ENCODE measurements at regions of chr20 and their contacts with region 1.

Region 1: DNA sequence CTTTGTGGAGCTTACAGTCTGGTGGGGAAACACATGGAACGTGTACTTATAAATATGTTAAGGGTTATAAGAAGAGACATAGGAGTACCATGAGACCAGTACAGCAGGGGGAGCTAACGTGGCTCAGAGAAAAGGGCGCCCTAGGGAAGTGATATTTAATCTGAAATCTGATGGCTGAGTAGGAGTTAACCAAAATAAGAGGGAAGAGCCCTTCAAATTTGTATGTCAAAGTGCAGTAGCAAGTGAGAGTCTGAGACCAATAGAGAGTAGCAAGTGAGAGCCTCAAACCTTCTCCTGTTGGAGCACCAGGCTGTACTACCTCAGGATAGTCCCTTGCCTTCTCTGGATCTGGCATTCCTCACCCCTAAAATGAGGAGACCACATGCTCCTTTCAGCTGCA is 6.1 kb upstream of the PKIG start:
- DNase-seq: peak; percentile 84
- ATAC-seq: peak; percentile 73
- H3K4me3 ChIP-seq: peak overlapping the region in 2 of 5 experiments; percentile 10 to 17
- H3K4me3 Mint-ChIP-seq: peak overlapping the region; percentile 48
- H3K27ac ChIP-seq: peak overlapping the region; percentile 17 to 24
- H3K27ac Mint-ChIP-seq: peak overlapping the region; percentile 66
- H3K4me1 ChIP-seq: peaks cover 36 to 39% of the 10 kb centered on the region in 2 donors
- H3K4me1 Mint-ChIP-seq: peaks cover 42% of the 10 kb centered on the region
- H3K27me3 ChIP-seq: no peaks in the 10 kb centered on the region
- H3K27me3 Mint-ChIP-seq: no peaks in the 10 kb centered on the region
- CTCF ChIP-seq: peak; percentile 73

Region 2: GRCh38 chr20:44388466-44389023 is 187.8 kb before region 1 on chr20:
- CTCF ChIA-PET with region 1: interaction called, 5 read pairs
- POLR2A ChIA-PET with region 1: no interaction called
- intact Hi-C with region 1: loop called (anchors 10 kb)
- DNase-seq: peak; percentile 63
- ATAC-seq: peak; percentile 69
- H3K4me3 ChIP-seq: no peak overlapping the region
- H3K4me3 Mint-ChIP-seq: no peak overlapping the region
- H3K27ac ChIP-seq: no peak overlapping the region
- H3K27ac Mint-ChIP-seq: no peak overlapping the region
- H3K4me1 ChIP-seq: peaks cover 3 to 9% of the 10 kb centered on the region in 2 donors
- H3K4me1 Mint-ChIP-seq: peaks cover 5% of the 10 kb centered on the region
- H3K27me3 ChIP-seq: peaks cover 0 to 15% (median 5%) of the 10 kb centered on the region in 4 experiments
- H3K27me3 Mint-ChIP-seq: peaks cover 30% of the 10 kb centered on the region
- CTCF ChIP-seq: peak; percentile 74

Region 3: DNA sequence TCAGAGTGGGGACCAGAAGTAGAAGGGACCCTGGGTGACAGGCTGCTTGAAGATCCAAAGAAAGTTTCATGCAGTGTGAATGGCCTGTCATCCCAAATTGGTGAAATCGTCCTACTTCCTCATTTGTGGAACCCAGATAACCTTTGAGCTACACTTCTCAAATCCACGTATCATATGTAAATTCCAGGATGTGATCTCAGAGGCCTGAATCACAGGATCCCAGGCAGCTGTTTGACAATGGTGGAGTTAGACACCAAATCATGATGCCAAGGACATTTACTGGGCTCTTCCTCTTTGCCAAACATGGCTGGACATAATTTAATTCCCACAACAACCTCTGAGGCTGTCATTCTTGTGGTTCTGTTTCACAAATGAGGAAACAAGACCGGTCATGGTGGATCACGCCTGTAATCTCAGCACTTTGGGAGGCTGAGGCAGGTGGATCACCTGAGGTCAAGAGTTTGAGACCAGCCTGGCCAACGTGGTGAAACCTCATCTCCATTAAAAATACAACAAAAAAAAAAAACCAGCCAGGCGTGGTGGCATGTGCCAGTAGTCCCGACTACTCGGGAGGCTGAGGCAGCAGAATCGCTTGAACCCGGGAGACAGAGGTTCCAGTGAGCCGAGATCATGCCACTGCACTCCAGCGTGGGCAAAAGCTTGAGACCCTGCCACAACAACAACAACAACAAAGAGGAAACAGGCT is 140.5 kb before region 1 on chr20:
- CTCF ChIA-PET with region 1: no interaction called
- POLR2A ChIA-PET with region 1: no interaction called
- intact Hi-C with region 1: no loop called
- DNase-seq: no peak
- ATAC-seq: no peak
- H3K4me3 ChIP-seq: no peak overlapping the region
- H3K4me3 Mint-ChIP-seq: no peak overlapping the region
- H3K27ac ChIP-seq: no peak overlapping the region
- H3K27ac Mint-ChIP-seq: no peak overlapping the region
- H3K4me1 ChIP-seq: no peaks in the 10 kb centered on the region
- H3K4me1 Mint-ChIP-seq: no peaks in the 10 kb centered on the region
- H3K27me3 ChIP-seq: no peaks in the 10 kb centered on the region
- H3K27me3 Mint-ChIP-seq: peaks cover 9% of the 10 kb centered on the region
- CTCF ChIP-seq: no peak

Region 4: GRCh38 chr20:44566013-44566412 is 10.3 kb before region 1 on chr20:
- CTCF ChIA-PET with region 1: interaction called, 10 read pairs
- POLR2A ChIA-PET with region 1: no interaction called
- intact Hi-C with region 1: no loop called
- DNase-seq: no peak
- ATAC-seq: no peak
- H3K4me3 ChIP-seq: no peak overlapping the region
- H3K4me3 Mint-ChIP-seq: no peak overlapping the region
- H3K27ac ChIP-seq: no peak overlapping the region
- H3K27ac Mint-ChIP-seq: no peak overlapping the region
- H3K4me1 ChIP-seq: no peaks in the 10 kb centered on the region
- H3K4me1 Mint-ChIP-seq: no peaks in the 10 kb centered on the region
- H3K27me3 ChIP-seq: no peaks in the 10 kb centered on the region
- H3K27me3 Mint-ChIP-seq: no peaks in the 10 kb centered on the region
- CTCF ChIP-seq: no peak

Region 5: DNA sequence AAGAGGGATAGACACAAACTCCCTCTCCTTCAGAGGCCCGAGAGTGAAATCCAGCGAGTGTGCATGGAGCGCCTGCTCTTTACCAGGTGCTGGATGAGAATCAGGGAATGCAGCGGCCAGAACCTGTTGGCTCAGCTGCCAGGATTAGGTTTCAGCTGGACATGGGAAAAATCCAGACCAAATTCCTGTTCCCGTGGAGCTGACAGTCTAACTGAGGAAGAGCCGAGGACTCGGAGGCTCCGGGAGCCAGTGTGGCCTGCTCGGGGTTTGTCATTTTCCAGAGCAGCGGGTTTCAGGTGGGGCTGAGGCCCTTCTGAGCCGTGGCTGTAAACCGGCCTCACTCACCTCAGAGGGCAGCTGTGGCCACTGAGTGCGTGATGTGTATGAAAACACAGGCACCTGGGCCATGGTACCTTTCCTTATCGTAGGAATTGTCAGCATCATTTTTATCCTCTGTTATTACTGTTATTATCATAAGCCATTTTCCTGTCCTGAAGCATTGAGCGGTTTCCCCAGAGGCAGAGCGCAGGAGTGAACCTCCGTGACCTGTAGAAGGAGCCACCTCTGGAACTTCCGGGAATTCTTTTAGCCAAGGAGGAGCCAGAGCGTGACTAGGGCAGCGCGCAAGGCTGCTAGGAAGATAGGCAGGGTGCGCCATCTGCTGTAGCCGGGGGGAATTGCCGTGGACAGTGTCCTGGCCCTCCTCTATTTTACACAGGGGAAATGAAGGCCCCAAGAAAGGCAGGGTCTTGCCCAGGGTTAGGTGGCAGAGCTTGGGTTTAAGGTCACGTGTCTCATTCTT is 33.4 kb after region 1 on chr20:
- CTCF ChIA-PET with region 1: interaction called, 772 read pairs
- POLR2A ChIA-PET with region 1: interaction called, 12 read pairs
- intact Hi-C with region 1: loop called (anchors 1 kb)
- DNase-seq: peak; percentile 89
- ATAC-seq: peak; percentile 96
- H3K4me3 ChIP-seq: peak overlapping the region in 2 of 5 experiments; percentile 5 to 28
- H3K4me3 Mint-ChIP-seq: peak overlapping the region; percentile 84
- H3K27ac ChIP-seq: peak overlapping the region; percentile 67 to 68
- H3K27ac Mint-ChIP-seq: peak overlapping the region; percentile 96
- H3K4me1 ChIP-seq: peaks cover 26 to 33% of the 10 kb centered on the region in 2 donors
- H3K4me1 Mint-ChIP-seq: peaks cover 55% of the 10 kb centered on the region
- H3K27me3 ChIP-seq: no peaks in the 10 kb centered on the region
- H3K27me3 Mint-ChIP-seq: no peaks in the 10 kb centered on the region
- CTCF ChIP-seq: peak; percentile 97

Region 6: DNA sequence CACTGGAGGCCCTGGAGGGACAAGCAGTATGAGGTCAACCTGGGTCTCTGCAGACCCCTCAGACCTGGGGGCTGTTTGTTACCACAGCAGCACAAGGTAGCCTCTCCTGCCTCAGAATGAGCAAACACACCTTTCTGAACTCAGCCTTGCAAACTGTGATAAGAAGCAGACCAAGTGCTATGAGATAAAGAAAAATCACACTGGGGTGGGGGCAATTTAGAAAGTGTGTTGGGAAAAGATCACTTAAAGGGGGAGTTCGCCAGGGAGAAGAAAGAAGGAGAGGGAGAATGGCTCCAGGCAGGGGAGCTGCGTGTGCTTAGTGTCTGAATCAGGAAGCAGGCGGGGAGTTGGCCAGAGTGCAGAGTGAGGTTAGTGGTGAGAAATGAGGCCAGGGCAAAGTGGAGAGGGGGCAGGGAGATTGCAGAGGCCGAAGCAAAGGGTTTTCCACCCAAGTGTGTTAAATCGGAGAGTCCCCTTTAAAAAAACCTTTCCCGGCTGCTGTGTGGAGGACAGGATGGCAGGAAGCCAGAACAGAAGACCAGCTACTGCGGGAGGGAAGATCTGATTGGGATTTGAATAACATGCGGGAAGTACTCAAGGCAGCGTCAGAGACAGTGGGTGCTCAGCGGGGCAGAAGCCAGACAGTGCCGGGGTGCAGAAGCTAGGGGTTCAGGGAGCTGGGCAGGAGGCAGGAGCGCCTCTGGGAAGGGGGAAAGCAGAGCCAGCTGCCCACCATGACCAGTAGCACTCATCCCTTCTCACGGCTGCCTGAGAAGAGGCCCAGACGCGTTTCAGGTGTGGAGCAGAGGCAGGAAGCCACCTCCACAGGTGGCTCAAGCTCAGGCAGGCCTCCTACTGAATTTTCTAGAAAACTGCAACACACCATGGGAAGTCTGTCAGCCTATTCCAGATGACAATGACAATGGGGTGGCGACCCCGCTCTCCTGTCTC is 66.2 kb after region 1 on chr20:
- CTCF ChIA-PET with region 1: interaction called, 17 read pairs
- POLR2A ChIA-PET with region 1: interaction called, 5 read pairs
- intact Hi-C with region 1: loop called (anchors 2 kb)
- DNase-seq: peak; percentile 59
- ATAC-seq: no peak
- H3K4me3 ChIP-seq: no peak overlapping the region
- H3K4me3 Mint-ChIP-seq: peak overlapping the region; percentile 71
- H3K27ac ChIP-seq: peak overlapping the region; percentile 50 to 74
- H3K27ac Mint-ChIP-seq: peak overlapping the region; percentile 84
- H3K4me1 ChIP-seq: peaks cover 47 to 61% of the 10 kb centered on the region in 2 donors
- H3K4me1 Mint-ChIP-seq: peaks cover 62% of the 10 kb centered on the region
- H3K27me3 ChIP-seq: no peaks in the 10 kb centered on the region
- H3K27me3 Mint-ChIP-seq: no peaks in the 10 kb centered on the region
- CTCF ChIP-seq: no peak

Region 7: GRCh38 chr20:44683263-44684046 is 107.2 kb after region 1 on chr20:
- CTCF ChIA-PET with region 1: interaction called, 37 read pairs
- POLR2A ChIA-PET with region 1: interaction called, 3 read pairs
- intact Hi-C with region 1: loop called (anchors 1 kb)
- DNase-seq: peak; percentile 71
- ATAC-seq: peak; percentile 47
- H3K4me3 ChIP-seq: no peak overlapping the region
- H3K4me3 Mint-ChIP-seq: no peak overlapping the region
- H3K27ac ChIP-seq: no peak overlapping the region
- H3K27ac Mint-ChIP-seq: no peak overlapping the region
- H3K4me1 ChIP-seq: peaks cover 0 to 11% of the 10 kb centered on the region in 2 donors
- H3K4me1 Mint-ChIP-seq: peaks cover 5% of the 10 kb centered on the region
- H3K27me3 ChIP-seq: peaks cover 0 to 3% (median 0%) of the 10 kb centered on the region in 4 experiments
- H3K27me3 Mint-ChIP-seq: peaks cover 10% of the 10 kb centered on the region
- CTCF ChIP-seq: peak; percentile 38